ENCODE measurements at regions of chr9 and their contacts with region 1.

Region 1: GRCh38 chr9:136093995-136094881 is 851 bp downstream of the NACC2 start:
- DNase-seq: peak; percentile 81 to 90
- ATAC-seq: peak; percentile 61 to 81
- H3K4me3 ChIP-seq: peak overlapping the region; percentile 79
- H3K27ac ChIP-seq: peak overlapping the region; percentile 92 to 94
- H3K4me1 ChIP-seq: peaks cover 54% of the 10 kb centered on the region
- CTCF ChIP-seq: no peak
- EP300 ChIP-seq: no peak
- POLR2A ChIP-seq: no peak
- RAD21 ChIP-seq: no peak

Region 2: DNA sequence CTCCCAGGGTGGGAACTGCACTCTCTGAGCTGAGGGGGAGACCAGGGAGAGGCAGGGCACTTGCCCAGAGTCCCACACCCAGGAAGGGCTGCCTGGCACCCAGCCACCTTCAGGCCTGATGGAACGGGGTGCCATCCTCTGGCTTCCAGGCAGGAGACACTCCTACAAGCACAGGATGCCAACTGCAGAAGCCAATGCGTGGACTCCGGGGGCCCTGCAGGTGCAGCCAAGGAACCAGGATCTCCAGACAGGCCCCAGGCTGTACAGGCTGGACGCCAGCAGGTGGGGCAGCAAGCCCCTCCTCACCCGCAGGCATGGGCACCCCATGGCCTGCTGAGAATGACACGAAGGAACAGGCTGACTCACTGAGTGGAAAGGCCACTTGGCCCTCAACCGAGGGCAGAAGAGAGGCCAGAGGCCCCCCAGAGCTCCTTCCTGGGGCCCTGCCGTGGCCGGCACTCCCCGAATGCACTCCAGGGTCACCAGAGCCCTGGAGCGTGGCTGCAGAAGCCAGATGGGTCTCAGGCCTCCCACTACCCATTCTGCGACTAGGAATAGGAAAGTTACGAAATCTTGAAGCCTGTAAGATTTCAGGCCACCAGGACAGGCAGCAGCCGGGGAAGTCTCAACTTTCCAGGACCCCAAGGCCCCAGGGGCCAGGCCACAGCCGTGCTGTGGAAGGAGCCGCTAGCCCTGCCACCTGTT is 14.9 kb before region 1 on chr9:
- CTCF ChIA-PET with region 1: interaction called, 27 read pairs
- POLR2A ChIA-PET with region 1: no interaction called
- DNase-seq: no peak
- ATAC-seq: peak; percentile 51 to 61
- H3K4me3 ChIP-seq: no peak overlapping the region
- H3K27ac ChIP-seq: peak overlapping the region; percentile 52 to 77; a peak in 5 of 6 replicates
- H3K4me1 ChIP-seq: peaks cover 31% of the 10 kb centered on the region
- CTCF ChIP-seq: no peak
- EP300 ChIP-seq: no peak
- POLR2A ChIP-seq: no peak
- RAD21 ChIP-seq: 0 out of 5 replicates have a peak, but pooled peaks of 1 of the 2 experiments have one; percentile 10

Region 3: GRCh38 chr9:136109351-136110081 is 15.3 kb after region 1 on chr9:
- CTCF ChIA-PET with region 1: interaction called, 22 read pairs
- POLR2A ChIA-PET with region 1: interaction called, 12 read pairs
- DNase-seq: peak; percentile 83 to 90
- ATAC-seq: peak; percentile 78 to 84
- H3K4me3 ChIP-seq: peak overlapping the region; percentile 35
- H3K27ac ChIP-seq: peak overlapping the region; percentile 92 to 97
- H3K4me1 ChIP-seq: peaks cover 36% of the 10 kb centered on the region
- CTCF ChIP-seq: 0 out of 3 replicates have a peak, but pooled peaks have one; percentile 15
- EP300 ChIP-seq: peak in 1 of 2 experiments; percentile 47; a peak in 1 of 5 replicates
- POLR2A ChIP-seq: peak; percentile 25
- RAD21 ChIP-seq: peak; percentile 16 to 43; a peak in 3 of 5 replicates

Measured in A549 (cell line).